Endothelial cell of umbilical vein (primary cell): ENCODE measurements at regions of chr11 and their contacts with region 1.

Region 1: DNA sequence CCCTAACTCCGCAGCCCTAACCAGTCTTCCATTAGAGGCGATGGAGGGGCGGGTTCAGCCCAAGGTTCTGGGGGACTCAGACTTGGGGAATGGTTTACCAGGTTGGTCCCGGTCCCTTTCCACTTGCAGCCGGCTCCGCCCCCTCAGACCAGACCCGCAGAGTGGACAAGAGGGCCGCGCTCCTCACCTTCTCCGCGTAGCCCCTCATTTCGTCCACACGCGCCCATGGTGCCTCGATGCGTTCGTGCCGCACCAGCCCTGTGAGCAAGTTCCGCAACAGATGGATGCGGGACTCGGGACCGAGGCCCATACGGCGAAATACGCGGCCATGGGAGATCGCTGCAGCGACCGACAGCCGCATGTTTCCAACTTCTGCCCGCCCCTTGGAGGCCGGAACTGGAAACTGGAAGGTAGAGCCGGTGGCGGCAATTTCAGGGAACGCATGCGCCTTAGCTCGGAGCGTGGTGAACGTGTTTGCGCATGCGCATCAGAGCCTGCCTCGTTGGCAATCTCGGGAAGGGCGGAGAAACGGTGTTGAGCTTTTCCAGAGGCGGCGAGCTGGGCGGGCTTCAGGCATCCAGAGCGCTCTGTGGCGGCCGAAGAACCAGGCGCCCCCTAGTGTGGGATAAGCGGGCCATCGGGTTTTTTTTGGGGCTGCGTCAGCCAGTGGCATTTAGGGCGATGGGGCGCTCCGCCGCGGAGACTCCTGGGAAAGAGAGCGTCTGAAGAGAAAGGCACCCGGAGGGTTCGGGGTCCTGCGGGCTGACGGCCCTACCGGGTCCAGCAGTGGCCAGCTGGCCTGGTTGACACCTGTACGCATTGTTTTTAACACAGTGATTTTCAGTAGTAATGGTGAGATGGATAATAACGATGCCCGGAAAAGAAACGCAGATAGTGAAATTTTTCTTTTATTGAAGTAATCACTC is at the start of gene MRPL17:
- DNase-seq: peak; percentile 100
- H3K4me3 ChIP-seq: peak within 1 kb of the TSS; percentile 54 to 91 (median 61)
- H3K27ac ChIP-seq: peak within 1 kb of the TSS; percentile 82
- H3K4me1 ChIP-seq: peaks cover 22% of the 10 kb centered on the region
- H3K27me3 ChIP-seq: no peaks in the 10 kb centered on the region
- CTCF ChIP-seq: peak; percentile 94 to 95
- POLR2A ChIP-seq: peak; percentile 97
- total RNA-seq, gene MRPL17: 86.8 and 87.2 TPM in 2 replicates

Region 2: GRCh38 chr11:6203327-6203726 is 479.9 kb before region 1 on chr11:
- CTCF ChIA-PET with region 1: no interaction called
- POLR2A ChIA-PET with region 1: no interaction called
- dilution Hi-C with region 1: no loop called
- intact Hi-C with region 1: no loop called
- DNase-seq: no peak
- H3K4me3 ChIP-seq: no peak overlapping the region
- H3K27ac ChIP-seq: no peak overlapping the region
- H3K4me1 ChIP-seq: no peaks in the 10 kb centered on the region
- H3K27me3 ChIP-seq: no peaks in the 10 kb centered on the region
- CTCF ChIP-seq: no peak
- POLR2A ChIP-seq: no peak

Region 3: GRCh38 chr11:6389921-6390724 is 293.1 kb before region 1 on chr11 and contains the start of gene SMPD1:
- CTCF ChIA-PET with region 1: no interaction called
- POLR2A ChIA-PET with region 1: no interaction called
- dilution Hi-C with region 1: no loop called
- intact Hi-C with region 1: no loop called
- DNase-seq: peak; percentile 90
- H3K4me3 ChIP-seq: peak within 1 kb of the TSS; percentile 71 to 82 (median 72)
- H3K27ac ChIP-seq: peak within 1 kb of the TSS; percentile 73
- H3K4me1 ChIP-seq: peaks cover 33% of the 10 kb centered on the region
- H3K27me3 ChIP-seq: no peaks in the 10 kb centered on the region
- CTCF ChIP-seq: no peak
- POLR2A ChIP-seq: peak; percentile 86
- total RNA-seq, gene SMPD1: 51.9 and 58.9 TPM in 2 replicates

Region 4: GRCh38 chr11:6481012-6481923 is 201.9 kb before region 1 on chr11 and contains the starts of genes ARFIP2 and TIMM10B:
- CTCF ChIA-PET with region 1: interaction called, 8 read pairs
- POLR2A ChIA-PET with region 1: no interaction called
- dilution Hi-C with region 1: no loop called
- intact Hi-C with region 1: loop called (anchors 2 kb)
- DNase-seq: peak; percentile 98
- H3K4me3 ChIP-seq: peak within 1 kb of the TSS; percentile 19 to 65 (median 57)
- H3K27ac ChIP-seq: peak within 1 kb of the TSS; percentile 72
- H3K4me1 ChIP-seq: peaks cover 18% of the 10 kb centered on the region
- H3K27me3 ChIP-seq: no peaks in the 10 kb centered on the region
- CTCF ChIP-seq: no peak
- POLR2A ChIP-seq: peak; percentile 70
- total RNA-seq, gene ARFIP2: 46.7 and 48.4 TPM in 2 replicates
- total RNA-seq, gene TIMM10B: 29.2 and 31.3 TPM in 2 replicates

Region 5: GRCh38 chr11:6576471-6577373 is 106.5 kb before region 1 on chr11:
- CTCF ChIA-PET with region 1: no interaction called
- POLR2A ChIA-PET with region 1: no interaction called
- dilution Hi-C with region 1: no loop called
- intact Hi-C with region 1: loop called (anchors 1 kb)
- DNase-seq: peak; percentile 84
- H3K4me3 ChIP-seq: peak overlapping the region in 1 of 3 experiments; percentile 0
- H3K27ac ChIP-seq: peak overlapping the region; percentile 69
- H3K4me1 ChIP-seq: peaks cover 32% of the 10 kb centered on the region
- H3K27me3 ChIP-seq: no peaks in the 10 kb centered on the region
- CTCF ChIP-seq: no peak
- POLR2A ChIP-seq: no peak

Region 6: DNA sequence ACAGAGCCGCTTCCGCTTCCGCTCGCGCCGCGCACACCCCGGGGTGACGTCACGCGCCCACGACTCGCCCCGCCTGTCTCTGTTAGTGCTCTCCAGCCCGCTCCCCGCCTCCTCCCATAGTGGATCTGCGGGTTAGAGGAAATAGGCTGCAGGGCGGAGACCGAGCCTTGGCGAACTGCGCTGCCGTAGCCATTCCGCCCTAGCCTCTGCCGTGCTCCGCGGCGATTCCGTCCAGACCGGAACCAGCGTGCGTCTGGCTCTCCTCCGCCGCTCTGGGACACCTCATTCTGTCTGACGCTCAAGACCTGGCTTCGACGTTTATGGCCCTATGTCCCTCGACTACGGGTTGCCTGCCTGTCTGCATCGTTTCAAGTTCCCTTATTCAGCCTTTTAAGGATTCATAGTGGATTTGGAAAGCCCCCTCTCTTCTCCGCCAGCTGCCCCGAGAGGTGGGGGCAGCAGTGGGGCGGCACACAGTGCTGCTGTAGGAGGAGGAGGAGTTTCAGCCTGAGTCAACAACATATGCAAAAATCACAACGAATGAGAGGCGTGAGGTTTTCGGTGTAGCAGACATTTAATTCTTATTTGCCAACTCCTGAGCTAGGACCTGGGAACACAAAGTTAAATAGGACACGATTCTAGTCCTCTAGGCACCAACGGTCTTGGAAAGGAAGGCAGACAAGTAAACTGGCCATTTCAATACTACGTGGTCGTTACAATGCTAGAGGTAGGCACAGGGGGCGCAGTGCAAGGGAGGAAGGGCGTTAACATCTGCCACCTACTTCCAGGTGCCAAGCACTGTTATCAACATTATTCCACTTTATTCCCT is 70.8 kb before region 1 on chr11 and contains the start of gene TAF10:
- CTCF ChIA-PET with region 1: interaction called, 35 read pairs
- POLR2A ChIA-PET with region 1: interaction called, 14 read pairs
- dilution Hi-C with region 1: no loop called
- intact Hi-C with region 1: loop called (anchors 1 kb)
- DNase-seq: peak; percentile 97
- H3K4me3 ChIP-seq: peak within 1 kb of the TSS; percentile 28 to 72 (median 71)
- H3K27ac ChIP-seq: peak within 1 kb of the TSS; percentile 89
- H3K4me1 ChIP-seq: peaks cover 57% of the 10 kb centered on the region
- H3K27me3 ChIP-seq: no peaks in the 10 kb centered on the region
- CTCF ChIP-seq: peak; percentile 41 to 49
- POLR2A ChIP-seq: peak; percentile 92
- total RNA-seq, gene TAF10: 86.2 and 105 TPM in 2 replicates

Region 7: DNA sequence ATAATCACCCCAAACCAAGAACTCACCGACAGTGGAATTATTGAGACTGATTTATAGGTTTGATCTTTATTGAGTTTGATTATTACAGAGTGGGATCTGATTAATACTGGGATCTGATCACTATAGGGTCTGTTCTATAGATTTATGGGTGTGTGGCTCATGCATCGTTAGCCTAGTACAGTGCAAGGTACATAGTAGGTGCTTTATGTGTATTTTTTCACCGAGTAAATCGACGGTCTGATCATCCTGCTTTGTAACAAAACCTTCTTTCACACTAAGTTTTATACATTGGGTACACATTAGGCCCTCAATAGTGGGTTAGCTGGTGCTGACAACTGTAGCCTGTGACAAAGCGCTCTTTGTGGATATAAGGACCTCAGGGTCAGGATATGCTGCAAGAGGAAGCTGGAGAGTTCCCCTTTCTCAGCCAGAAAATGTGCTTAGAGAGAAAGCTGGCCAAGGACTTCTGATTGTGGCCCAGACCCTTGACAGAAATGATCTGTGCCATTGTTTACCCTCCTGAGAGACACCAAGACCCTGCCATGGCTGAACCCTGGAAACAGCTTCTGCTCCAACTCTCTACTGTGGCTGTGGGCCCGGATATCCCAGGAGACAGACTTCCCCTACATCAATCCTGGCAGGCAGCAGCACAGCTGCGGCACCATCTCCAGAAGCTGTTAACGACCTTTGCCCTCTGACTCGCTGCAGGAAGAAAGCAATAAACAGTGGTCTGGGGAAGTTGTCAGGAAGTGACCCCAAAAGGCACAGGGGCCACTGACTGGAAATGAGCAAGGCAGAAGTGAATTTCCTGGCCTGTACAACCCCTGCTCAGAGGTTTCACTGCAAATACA is 47.9 kb before region 1 on chr11:
- CTCF ChIA-PET with region 1: interaction called, 23 read pairs
- POLR2A ChIA-PET with region 1: interaction called, 6 read pairs
- dilution Hi-C with region 1: no loop called
- intact Hi-C with region 1: loop called (anchors 1 kb)
- DNase-seq: peak; percentile 98
- H3K4me3 ChIP-seq: peak overlapping the region in 1 of 3 experiments; percentile 37
- H3K27ac ChIP-seq: peak overlapping the region; percentile 91
- H3K4me1 ChIP-seq: peaks cover 47% of the 10 kb centered on the region
- H3K27me3 ChIP-seq: no peaks in the 10 kb centered on the region
- CTCF ChIP-seq: no peak
- POLR2A ChIP-seq: peak; percentile 83

Region 8: GRCh38 chr11:6667733-6668374 is 15.3 kb before region 1 on chr11:
- CTCF ChIA-PET with region 1: interaction called, 13 read pairs
- POLR2A ChIA-PET with region 1: no interaction called
- dilution Hi-C with region 1: no loop called
- intact Hi-C with region 1: loop called (anchors 1 kb)
- DNase-seq: peak; percentile 34
- H3K4me3 ChIP-seq: no peak overlapping the region
- H3K27ac ChIP-seq: no peak overlapping the region
- H3K4me1 ChIP-seq: no peaks in the 10 kb centered on the region
- H3K27me3 ChIP-seq: no peaks in the 10 kb centered on the region
- CTCF ChIP-seq: peak; percentile 39 to 53
- POLR2A ChIP-seq: no peak

Region 9: GRCh38 chr11:6705905-6706535 is 22.8 kb after region 1 on chr11:
- CTCF ChIA-PET with region 1: interaction called, 8 read pairs
- POLR2A ChIA-PET with region 1: no interaction called
- dilution Hi-C with region 1: no loop called
- intact Hi-C with region 1: loop called (anchors 1 kb)
- DNase-seq: peak; percentile 66
- H3K4me3 ChIP-seq: no peak overlapping the region
- H3K27ac ChIP-seq: no peak overlapping the region
- H3K4me1 ChIP-seq: peaks cover 6% of the 10 kb centered on the region
- H3K27me3 ChIP-seq: no peaks in the 10 kb centered on the region
- CTCF ChIP-seq: peak; percentile 72 to 78
- POLR2A ChIP-seq: no peak